Sigmoid colon (tissue), 7 donors: ENCODE measurements at regions of chr1 and their contacts with region 1.

Region 1: DNA sequence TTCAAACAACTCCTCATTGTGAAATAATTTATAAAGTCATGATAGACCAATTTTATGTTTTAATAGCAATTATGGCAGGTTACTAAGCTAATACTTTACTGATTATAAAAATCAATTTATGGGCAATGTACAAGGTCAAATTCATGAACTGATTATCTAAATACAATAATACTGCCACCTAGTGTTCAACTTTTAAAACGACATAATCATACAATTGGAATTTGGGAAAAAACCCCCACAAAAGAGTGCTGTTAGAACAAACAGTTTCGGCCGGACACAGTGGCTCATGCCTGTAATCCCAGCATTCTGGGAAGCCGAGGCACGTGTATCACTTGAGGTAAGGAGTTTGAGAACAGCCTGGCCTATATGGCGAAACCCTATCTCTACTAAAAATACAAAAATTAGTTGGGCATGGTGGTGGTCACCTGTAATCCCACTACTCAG is 14.0 kb downstream of the GTF2B start:
- DNase-seq: no peak
- H3K4me3 ChIP-seq: no peak overlapping the region
- H3K27ac ChIP-seq: peak overlapping the region in 1 of 4 donors; percentile 24
- H3K4me1 ChIP-seq: peaks cover 0 to 37% (median 20%) of the 10 kb centered on the region in 4 donors
- H3K27me3 ChIP-seq: no peaks in the 10 kb centered on the region
- CTCF ChIP-seq: peak in 3 of 4 experiments; percentile 40 to 57 (median 48)
- EP300 ChIP-seq: no peak
- POLR2A ChIP-seq: no peak

Region 2: DNA sequence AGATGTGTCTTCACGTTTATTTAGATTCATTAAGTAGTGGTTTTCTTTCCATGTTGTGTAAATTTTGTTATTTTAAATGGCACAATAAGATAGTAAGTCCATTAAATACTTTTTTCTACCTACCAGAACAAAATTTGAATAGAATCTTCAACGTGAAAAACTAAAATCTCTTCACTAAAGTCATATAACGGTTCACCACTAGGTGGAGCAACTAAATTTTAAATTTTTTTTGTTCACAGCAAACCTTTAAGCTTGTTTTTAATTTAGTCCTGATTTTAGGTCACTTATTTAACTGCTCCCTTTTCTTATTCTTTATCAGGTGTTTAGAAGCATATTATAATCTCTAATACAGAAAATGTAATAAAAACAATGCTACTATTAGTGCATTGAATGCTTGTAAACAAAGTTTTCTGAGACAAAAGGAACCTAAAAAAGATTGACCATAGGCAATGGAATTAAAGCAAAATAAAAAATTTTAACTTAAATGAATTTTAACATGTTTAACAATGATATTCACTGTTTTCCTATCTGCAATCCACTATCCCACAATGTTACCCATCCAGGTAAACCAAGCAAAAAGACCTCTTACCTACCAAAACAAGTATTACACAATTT is 221.6 kb before region 1 on chr1:
- intact Hi-C with region 1: loop called (anchors 5 kb)
- DNase-seq: no peak
- H3K4me3 ChIP-seq: no peak overlapping the region
- H3K27ac ChIP-seq: no peak overlapping the region
- H3K4me1 ChIP-seq: no peaks in the 10 kb centered on the region
- H3K27me3 ChIP-seq: no peaks in the 10 kb centered on the region
- CTCF ChIP-seq: peak; percentile 18 to 53 (median 42)
- EP300 ChIP-seq: no peak
- POLR2A ChIP-seq: no peak

Region 3: GRCh38 chr1:88800382-88801051 is 76.9 kb before region 1 on chr1:
- intact Hi-C with region 1: loop called (anchors 10 kb)
- DNase-seq: no peak
- H3K4me3 ChIP-seq: no peak overlapping the region
- H3K27ac ChIP-seq: no peak overlapping the region
- H3K4me1 ChIP-seq: no peaks in the 10 kb centered on the region
- H3K27me3 ChIP-seq: no peaks in the 10 kb centered on the region
- CTCF ChIP-seq: peak in 2 of 4 experiments; percentile 20 to 56
- EP300 ChIP-seq: no peak
- POLR2A ChIP-seq: no peak

Region 4: DNA sequence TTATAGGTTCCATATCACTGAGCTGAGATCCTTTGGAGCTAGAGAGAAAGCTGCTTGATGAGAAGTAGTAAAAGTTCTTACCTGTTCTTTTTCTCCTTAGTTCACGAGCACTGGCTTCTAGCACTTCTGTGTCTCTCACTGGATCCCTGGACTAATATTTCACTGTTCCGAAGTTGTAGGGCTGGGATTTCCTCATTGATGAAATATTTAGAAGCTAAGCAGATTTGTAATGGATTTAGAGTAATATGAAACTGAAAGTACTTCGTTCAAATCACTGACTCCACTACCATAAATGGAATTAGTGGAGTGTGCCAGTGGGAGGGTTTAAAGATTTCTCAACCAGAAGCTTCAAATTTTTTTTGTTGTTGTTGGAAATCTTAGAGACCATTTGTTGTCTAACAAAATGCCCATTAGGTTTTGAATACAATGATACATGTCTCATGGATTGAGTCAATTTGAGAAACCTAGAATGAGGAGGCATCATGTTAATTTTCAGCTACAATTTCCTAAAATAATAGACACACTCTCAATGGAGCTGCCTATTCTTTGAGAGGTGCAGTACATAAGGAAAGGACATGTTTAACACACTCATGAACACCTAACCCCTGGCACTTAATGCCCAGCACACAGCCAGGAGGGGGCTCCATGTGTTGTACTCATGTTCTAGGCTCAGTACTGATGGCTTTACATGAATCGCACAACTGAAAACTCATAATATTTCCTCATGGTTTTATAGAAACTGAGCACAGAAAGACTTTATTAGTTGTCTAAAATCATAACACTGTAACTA is 187.9 kb after region 1 on chr1 and contains the start of gene GBP1:
- intact Hi-C with region 1: no loop called
- DNase-seq: no peak
- H3K4me3 ChIP-seq: peak within 1 kb of the TSS; percentile 35 to 63 (median 54)
- H3K27ac ChIP-seq: peak within 1 kb of the TSS; percentile 82 to 91 (median 88)
- H3K4me1 ChIP-seq: peaks cover 0 to 41% (median 25%) of the 10 kb centered on the region in 4 donors
- H3K27me3 ChIP-seq: no peaks in the 10 kb centered on the region
- CTCF ChIP-seq: no peak
- EP300 ChIP-seq: peak in 2 of 4 donors; percentile 3 to 6
- POLR2A ChIP-seq: peak in 1 of 2 donors; percentile 30
- total RNA-seq, gene GBP1: 24.1 to 72.1 (median 31.0) TPM

Region 5: DNA sequence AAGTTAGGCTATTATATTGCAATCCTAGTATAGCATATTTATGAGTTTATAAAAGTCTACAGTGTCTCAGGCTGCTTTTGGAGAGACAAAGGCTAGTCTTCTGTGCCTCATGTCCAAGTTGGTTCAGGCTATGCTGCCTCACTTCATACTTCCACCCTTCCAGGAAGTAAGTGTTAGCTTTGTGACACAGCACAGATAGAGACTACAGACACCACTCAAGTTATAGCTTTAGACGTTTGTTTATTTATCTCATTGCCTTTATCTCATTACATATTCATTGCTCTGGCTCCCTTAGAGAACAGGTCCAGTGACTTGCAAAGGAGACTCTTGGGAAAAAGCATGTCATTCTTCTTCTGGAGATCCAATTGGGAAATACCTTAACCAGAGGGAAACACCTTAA is 343.9 kb after region 1 on chr1:
- intact Hi-C with region 1: no loop called
- DNase-seq: no peak
- H3K4me3 ChIP-seq: no peak overlapping the region
- H3K27ac ChIP-seq: no peak overlapping the region
- H3K4me1 ChIP-seq: no peaks in the 10 kb centered on the region
- H3K27me3 ChIP-seq: no peaks in the 10 kb centered on the region
- CTCF ChIP-seq: no peak
- EP300 ChIP-seq: no peak
- POLR2A ChIP-seq: no peak